Endothelial cell of umbilical vein (primary cell): ENCODE measurements at regions of chr21 and their contacts with region 1.

Region 1: GRCh38 chr21:29258626-29259335 is 39.9 kb upstream of the BACH1 start:
- DNase-seq: peak; percentile 61
- H3K4me3 ChIP-seq: peak overlapping the region in 1 of 3 experiments; percentile 13
- H3K27ac ChIP-seq: peak overlapping the region; percentile 22
- H3K4me1 ChIP-seq: peaks cover 25% of the 10 kb centered on the region
- H3K27me3 ChIP-seq: no peaks in the 10 kb centered on the region
- CTCF ChIP-seq: no peak
- POLR2A ChIP-seq: no peak

Region 2: DNA sequence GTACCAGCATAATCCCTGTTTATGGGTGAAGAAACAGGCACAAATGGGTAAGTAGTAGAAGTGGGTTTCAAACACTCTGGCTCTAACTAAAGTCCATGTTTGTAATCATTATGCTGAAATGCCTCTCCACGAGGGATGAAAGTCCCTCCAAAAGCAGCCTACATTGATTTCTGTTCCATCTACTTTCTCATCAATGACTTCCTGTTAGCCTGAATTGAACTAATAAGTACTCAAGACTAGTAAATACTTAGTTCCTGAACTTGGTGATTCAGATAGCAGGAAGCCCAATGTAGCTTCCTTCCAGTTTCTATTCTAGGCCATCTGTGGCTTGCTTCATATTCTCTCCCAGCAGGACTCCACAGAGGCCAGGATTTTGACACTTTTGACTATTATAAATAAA is 28.6 kb after region 1 on chr21:
- CTCF ChIA-PET with region 1: interaction called, 5 read pairs
- POLR2A ChIA-PET with region 1: no interaction called
- dilution Hi-C with region 1: no loop called
- intact Hi-C with region 1: loop called (anchors 2 kb)
- DNase-seq: peak; percentile 60
- H3K4me3 ChIP-seq: peak overlapping the region in 1 of 3 experiments; percentile 21
- H3K27ac ChIP-seq: no peak overlapping the region
- H3K4me1 ChIP-seq: peaks cover 32% of the 10 kb centered on the region
- H3K27me3 ChIP-seq: peaks cover 3 to 5% of the 10 kb centered on the region in 2 experiments
- CTCF ChIP-seq: no peak
- POLR2A ChIP-seq: no peak